ENCODE measurements at regions of chr12 and their contacts with region 1.

Region 1: GRCh38 chr12:111557271-111558106 is 41.6 kb downstream of the ATXN2 start:
- DNase-seq: no peak
- ATAC-seq: no peak
- H3K4me3 ChIP-seq: no peak overlapping the region
- H3K27ac ChIP-seq: no peak overlapping the region
- H3K4me1 ChIP-seq: peaks cover 0 to 1% of the 10 kb centered on the region in 2 donors
- H3K27me3 ChIP-seq: no peaks in the 10 kb centered on the region

Region 2: DNA sequence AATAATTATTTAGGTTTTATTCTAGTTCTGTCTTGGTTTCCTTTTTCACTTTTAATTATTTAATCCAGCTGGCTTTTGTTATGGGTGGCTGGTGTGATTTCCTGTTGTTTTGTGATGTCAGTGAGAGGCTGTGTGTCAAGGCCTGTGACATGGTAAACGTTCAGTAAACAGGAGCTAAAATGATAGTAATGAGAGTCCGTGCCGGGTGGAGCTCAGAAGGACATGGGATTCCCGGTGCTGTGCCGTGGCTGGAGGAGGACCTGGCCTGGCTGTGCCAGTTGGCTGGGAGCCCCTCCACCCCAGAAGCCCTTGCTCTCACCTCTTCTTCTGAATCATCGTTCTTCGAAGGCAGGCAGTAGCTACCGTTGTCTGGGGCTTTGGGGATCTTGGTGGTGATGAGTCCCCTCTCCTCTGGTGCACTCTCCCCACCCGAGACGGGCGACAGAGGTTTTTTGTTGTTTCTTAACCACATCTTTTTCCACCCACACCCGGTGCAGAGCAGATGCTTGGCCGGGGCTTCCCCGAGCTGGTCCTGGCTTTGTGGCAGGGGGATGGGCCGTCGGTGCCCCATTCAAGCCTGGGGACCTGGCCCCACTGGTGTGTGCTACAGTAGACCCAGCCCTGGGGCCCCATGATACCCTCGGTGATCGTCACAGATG is 122.7 kb before region 1 on chr12:
- intact Hi-C with region 1: no loop called
- DNase-seq: peak in 1 of 2 donors; percentile 47
- ATAC-seq: peak; percentile 54
- H3K4me3 ChIP-seq: no peak overlapping the region
- H3K27ac ChIP-seq: peak overlapping the region in 1 of 2 donors; percentile 2
- H3K4me1 ChIP-seq: no peaks in the 10 kb centered on the region
- H3K27me3 ChIP-seq: no peaks in the 10 kb centered on the region

Region 3: GRCh38 chr12:111599459-111600204 is 42.1 kb after region 1 on chr12:
- intact Hi-C with region 1: loop called in 1 of 2 experiments (anchors 5 kb)
- DNase-seq: peak; percentile 94 to 96
- ATAC-seq: peak; percentile 94
- H3K4me3 ChIP-seq: peak overlapping the region; percentile 36 to 99
- H3K27ac ChIP-seq: peak overlapping the region; percentile 83 to 93
- H3K4me1 ChIP-seq: no peaks in the 10 kb centered on the region
- H3K27me3 ChIP-seq: no peaks in the 10 kb centered on the region